Mammary epithelial cell (primary cell): ENCODE measurements at regions of chr20 and their contacts with region 1.

Region 1: DNA sequence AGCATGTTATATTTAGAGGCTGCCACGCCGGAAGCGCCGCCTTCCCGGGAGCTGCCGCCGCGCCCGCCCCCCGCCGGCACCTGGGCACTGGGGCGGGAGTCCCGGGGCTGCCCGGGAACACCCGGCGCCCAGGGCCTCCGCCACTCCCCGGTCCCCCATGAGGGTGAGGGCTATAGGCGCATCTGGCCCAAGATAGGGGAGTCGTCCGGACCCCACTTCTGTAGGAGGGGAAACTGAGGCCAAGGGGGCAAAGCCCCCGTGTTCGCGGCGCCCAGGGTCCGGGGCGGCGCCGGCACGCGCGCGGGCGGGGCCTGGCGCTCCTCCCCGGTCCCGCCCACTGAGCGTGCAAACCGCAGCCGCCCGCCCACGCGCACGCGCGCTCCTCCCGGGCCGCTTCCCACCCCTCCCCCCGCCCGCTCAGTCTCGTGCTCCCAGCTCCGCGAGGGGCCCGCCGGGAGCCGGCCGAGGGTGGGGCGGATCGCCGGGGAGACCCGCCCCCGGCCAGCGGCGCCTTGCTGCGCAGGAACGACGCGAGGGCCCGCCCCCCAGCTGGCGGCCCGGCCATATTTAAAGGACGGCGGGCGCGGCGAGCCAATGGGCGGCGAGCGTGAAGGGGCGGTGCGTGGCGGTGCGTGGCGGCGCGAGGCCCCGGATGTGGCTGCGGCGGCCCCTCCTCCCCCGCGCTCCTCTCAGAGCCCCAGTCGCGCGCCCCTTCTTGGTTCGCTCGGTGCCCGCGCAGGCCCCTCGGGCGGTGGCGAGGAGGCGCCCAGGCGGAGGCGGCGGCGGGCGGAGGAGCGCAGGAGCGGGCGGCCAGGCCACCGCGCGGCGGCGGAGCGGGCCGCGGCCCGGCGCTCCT is at the start of gene LSM14B:
- DNase-seq: peak; percentile 97
- H3K4me3 ChIP-seq: peak within 1 kb of the TSS; percentile 79 to 82 (median 80)
- H3K27ac ChIP-seq: peak within 1 kb of the TSS; percentile 73
- H3K4me1 ChIP-seq: peaks cover 8% of the 10 kb centered on the region
- H3K27me3 ChIP-seq: no peaks in the 10 kb centered on the region
- CTCF ChIP-seq: no peak
- total RNA-seq, gene LSM14B: 31.5 to 36.3 TPM

Region 2: DNA sequence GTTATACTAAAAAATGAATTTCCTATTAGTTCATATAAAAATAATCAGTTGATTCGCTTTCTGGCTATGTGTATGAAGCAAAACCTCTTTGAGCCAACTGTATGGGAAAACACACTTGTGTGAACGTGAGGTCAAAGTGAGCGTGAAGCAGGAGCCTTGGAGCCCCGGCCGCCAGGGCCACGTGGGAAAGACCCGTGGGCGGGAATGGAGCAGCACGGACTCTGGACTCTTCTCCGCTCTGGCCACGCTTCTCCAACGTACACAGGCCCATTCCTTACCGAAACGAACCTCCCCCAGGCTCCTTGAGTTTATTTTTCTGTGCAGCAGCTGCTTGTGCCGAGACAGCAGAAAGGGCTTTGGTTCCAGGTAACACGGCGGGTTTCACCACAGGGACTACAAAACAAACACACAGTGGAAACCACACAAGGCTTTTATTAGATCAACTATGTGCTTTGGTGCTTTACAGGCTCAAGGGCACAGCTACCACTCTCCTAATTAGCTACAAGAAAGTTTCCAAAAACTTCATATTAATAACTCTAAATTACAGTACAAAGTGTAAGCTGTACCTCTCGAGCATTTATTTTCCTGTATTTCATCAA is 119.0 kb before region 1 on chr20:
- CTCF ChIA-PET with region 1: no interaction called
- dilution Hi-C with region 1: no loop called
- in situ Hi-C with region 1: loop called in 1 of 2 experiments (anchors 10 kb)
- intact Hi-C with region 1: no loop called
- DNase-seq: no peak
- H3K4me3 ChIP-seq: no peak overlapping the region
- H3K27ac ChIP-seq: no peak overlapping the region
- H3K4me1 ChIP-seq: peaks cover 16% of the 10 kb centered on the region
- H3K27me3 ChIP-seq: no peaks in the 10 kb centered on the region
- CTCF ChIP-seq: no peak

Region 3: DNA sequence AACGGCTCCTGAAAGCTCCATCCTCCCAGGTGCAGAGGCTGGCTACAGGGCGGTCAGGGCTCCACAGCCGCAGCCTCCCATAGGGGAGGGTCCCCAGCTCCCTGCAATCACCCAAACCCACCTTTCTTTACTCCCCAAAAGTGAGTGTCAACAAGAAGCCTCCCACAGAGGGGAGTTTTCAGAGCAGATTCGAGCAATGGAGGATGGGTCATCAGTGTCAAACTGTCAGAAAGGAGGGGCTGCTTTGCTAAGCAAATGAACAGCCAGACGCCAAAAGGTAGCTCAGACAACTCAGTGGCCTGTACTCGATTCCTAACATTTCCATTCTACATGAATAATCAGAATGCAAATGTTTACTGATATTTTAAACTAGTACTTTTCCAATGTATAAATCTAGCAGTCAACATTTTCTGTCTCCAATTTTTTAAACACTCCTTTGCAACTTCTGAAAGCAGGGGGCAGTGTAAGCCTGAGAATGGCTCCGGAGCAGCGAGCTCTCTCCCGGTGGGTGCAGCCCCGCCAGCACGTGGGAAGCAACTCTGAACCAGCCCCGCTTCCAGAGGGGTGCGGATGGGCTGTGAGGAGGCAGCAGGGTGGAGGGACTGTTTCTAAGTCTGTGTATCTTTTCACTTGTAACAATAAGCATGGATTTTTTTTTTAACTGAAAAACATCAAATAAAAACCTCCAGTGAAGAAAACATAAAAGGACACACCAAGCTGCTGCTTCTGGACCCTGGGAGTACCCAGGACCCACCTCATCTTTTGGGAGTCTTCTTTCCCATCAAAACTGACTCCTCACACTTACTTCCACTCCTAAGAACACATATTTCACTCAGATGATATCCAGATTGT is 111.2 kb before region 1 on chr20:
- CTCF ChIA-PET with region 1: no interaction called
- dilution Hi-C with region 1: no loop called
- in situ Hi-C with region 1: loop called in 1 of 2 experiments (anchors 10 kb)
- intact Hi-C with region 1: loop called (anchors 5 kb)
- DNase-seq: peak; percentile 10
- H3K4me3 ChIP-seq: no peak overlapping the region
- H3K27ac ChIP-seq: no peak overlapping the region
- H3K4me1 ChIP-seq: peaks cover 3% of the 10 kb centered on the region
- H3K27me3 ChIP-seq: no peaks in the 10 kb centered on the region
- CTCF ChIP-seq: peak; percentile 35 to 69

Region 4: GRCh38 chr20:62065669-62066338 is 56.2 kb before region 1 on chr20 and contains the start of gene TAF4:
- CTCF ChIA-PET with region 1: no interaction called
- dilution Hi-C with region 1: no loop called
- in situ Hi-C with region 1: no loop called
- intact Hi-C with region 1: loop called (anchors 1 kb)
- DNase-seq: peak; percentile 61
- H3K4me3 ChIP-seq: peak within 1 kb of the TSS; percentile 66 to 78 (median 75)
- H3K27ac ChIP-seq: peak within 1 kb of the TSS; percentile 24
- H3K4me1 ChIP-seq: peaks cover 23% of the 10 kb centered on the region
- H3K27me3 ChIP-seq: no peaks in the 10 kb centered on the region
- CTCF ChIP-seq: no peak
- total RNA-seq, gene TAF4: 4.5 to 15.0 TPM

Region 5: GRCh38 chr20:62111148-62111547 is 10.9 kb before region 1 on chr20:
- CTCF ChIA-PET with region 1: interaction called, 17 read pairs
- dilution Hi-C with region 1: no loop called
- in situ Hi-C with region 1: no loop called
- intact Hi-C with region 1: no loop called
- DNase-seq: no peak
- H3K4me3 ChIP-seq: no peak overlapping the region
- H3K27ac ChIP-seq: no peak overlapping the region
- H3K4me1 ChIP-seq: no peaks in the 10 kb centered on the region
- H3K27me3 ChIP-seq: no peaks in the 10 kb centered on the region
- CTCF ChIP-seq: no peak

Region 6: GRCh38 chr20:62136283-62137091 is 14.5 kb after region 1 on chr20:
- CTCF ChIA-PET with region 1: no interaction called
- dilution Hi-C with region 1: no loop called
- in situ Hi-C with region 1: no loop called
- intact Hi-C with region 1: loop called (anchors 2 kb)
- DNase-seq: peak; percentile 43
- H3K4me3 ChIP-seq: no peak overlapping the region
- H3K27ac ChIP-seq: no peak overlapping the region
- H3K4me1 ChIP-seq: peaks cover 9% of the 10 kb centered on the region
- H3K27me3 ChIP-seq: no peaks in the 10 kb centered on the region
- CTCF ChIP-seq: peak; percentile 85 to 86

Region 7: DNA sequence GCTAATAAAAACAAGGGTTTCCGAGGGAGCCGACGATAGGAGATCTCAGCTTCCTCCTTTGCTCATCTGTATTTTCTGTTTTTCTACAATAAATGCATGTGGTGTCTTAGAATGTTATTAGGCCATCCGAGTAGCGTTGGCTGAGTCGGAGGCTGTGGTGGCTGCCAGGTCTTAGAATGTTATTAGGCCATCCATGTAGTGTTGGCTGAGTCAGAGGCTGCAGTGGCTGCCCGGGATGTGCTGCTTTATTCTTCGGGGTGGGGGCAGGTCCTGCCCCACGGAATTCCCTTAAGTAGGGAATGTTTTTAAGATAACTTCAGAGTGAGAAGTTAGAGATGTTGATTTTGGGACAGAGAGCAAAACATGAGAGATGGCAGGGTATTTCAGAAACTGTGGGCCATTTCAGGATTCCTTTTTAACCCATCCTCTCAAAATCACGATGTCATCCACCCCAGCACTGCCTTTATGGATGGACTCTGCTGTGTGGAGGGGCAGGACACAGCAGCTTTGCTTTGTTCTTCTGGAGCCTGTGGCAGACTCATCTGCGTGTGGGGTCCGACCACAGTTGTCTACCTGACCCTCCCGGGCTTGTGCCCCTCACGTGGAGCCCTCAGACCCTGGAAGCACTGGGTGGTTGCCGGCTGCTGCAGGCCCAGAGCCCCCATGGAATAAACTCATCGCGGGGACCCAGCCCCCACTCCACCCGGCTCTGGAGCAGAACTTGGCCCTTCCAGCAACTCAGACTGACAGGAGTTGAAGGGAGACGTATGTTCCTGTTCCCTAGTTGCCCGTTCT is 136.7 kb after region 1 on chr20:
- CTCF ChIA-PET with region 1: no interaction called
- dilution Hi-C with region 1: no loop called
- in situ Hi-C with region 1: no loop called
- intact Hi-C with region 1: no loop called
- DNase-seq: peak; percentile 49
- H3K4me3 ChIP-seq: no peak overlapping the region
- H3K27ac ChIP-seq: no peak overlapping the region
- H3K4me1 ChIP-seq: peaks cover 5% of the 10 kb centered on the region
- H3K27me3 ChIP-seq: no peaks in the 10 kb centered on the region
- CTCF ChIP-seq: no peak